ENCODE measurements at regions of chr17 and their contacts with region 1.

Region 1: DNA sequence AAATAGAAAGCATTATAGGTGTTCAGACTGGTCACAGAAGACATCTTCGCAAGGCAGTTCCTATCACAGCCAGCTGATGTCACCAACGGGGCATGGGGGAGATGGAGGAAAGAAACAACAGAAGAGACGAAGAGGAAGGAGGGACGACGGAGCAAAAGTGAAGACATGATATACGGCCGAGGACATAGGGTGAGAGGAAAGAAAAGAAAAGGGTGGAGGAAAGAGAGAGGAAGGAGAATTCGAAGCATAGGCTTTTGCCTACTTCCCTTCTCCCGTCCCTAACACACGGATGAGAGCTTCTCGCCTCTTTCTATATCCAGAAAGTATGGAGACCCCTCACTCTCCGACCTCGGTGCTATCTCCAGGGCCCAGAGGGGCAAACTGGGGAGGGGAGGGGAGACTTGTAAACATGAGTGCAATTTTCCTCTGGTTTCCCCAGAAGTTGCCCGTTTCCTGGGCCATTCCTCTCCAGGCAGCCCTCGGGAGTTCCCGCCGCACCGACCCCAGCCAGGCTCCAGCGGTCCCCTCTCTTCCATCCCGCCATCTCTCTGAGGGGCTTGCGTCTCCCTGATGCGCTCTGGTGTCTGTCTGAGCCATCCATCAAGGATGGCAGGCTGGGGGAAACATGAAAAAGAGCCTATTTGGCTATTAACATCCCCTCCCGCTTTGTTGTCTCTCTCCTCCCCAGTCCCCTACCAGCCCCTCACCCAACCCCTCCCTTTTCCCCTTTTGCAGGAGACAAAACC is 26.0 kb downstream of the COPZ2 start:
- DNase-seq: no peak
- ATAC-seq: peak in 5 of 8 donors; percentile 25 to 62 (median 44)
- H3K4me3 ChIP-seq: peak overlapping the region in 9 of 10 donors; percentile 23 to 52 (median 42)
- H3K27ac ChIP-seq: no peak overlapping the region
- H3K4me1 ChIP-seq: peaks cover 0 to 13% (median 10%) of the 10 kb centered on the region in 9 donors
- H3K27me3 ChIP-seq: peaks cover 0 to 66% (median 59%) of the 10 kb centered on the region in 7 donors
- CTCF ChIP-seq: peak in 5 of 9 donors; percentile 4 to 52 (median 33)

Region 2: DNA sequence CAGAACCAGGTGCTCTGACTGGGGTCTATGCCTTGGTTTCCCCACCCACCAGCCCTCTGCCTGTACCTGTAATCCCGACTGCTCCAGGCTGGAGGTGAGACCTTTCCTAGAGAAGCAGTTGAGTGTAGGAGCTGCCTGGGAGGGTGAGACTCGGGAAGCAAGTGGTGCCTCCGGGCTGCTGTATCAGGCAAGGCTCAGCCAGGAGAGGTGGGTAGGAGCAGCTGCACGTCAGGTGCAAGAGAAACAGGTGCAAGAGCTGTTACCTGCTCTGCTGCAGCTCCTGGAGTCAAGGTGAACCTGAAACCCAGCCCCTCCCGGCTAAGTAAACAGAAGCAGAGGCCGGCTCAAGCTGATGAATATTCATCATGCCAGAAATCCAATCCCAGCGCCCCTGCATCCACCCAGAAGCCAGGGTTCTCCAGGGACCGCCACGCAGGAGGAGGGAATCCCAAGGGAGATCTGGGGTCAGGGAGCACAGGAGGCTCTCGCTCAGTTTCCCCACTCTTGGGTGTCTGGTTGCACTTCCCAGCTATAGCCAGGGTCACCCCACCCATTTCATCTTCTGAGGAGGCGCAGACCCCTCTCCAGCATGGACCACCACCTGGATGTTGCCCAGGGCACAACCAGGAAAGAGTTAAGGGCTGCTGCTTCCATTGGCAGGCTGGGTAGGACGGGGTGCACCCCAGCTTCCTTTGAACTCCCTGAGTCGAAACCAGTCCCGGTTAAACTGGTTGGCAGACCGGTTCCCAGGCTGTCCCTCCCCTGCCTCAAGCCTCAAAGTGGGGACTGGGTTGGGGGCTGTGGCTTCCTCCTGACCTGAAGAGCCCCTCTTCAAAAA is 53.8 kb before region 1 on chr17 and contains the start of gene PRR15L:
- intact Hi-C with region 1: loop called in 1 of 10 experiments (anchors 10 kb)
- DNase-seq: no peak
- ATAC-seq: no peak
- H3K4me3 ChIP-seq: no peak within 1 kb of the TSS
- H3K27ac ChIP-seq: no peak within 1 kb of the TSS
- H3K4me1 ChIP-seq: no peaks in the 10 kb centered on the region
- H3K27me3 ChIP-seq: no peaks in the 10 kb centered on the region
- CTCF ChIP-seq: no peak
- total RNA-seq, gene PRR15L: not detected

Region 3: DNA sequence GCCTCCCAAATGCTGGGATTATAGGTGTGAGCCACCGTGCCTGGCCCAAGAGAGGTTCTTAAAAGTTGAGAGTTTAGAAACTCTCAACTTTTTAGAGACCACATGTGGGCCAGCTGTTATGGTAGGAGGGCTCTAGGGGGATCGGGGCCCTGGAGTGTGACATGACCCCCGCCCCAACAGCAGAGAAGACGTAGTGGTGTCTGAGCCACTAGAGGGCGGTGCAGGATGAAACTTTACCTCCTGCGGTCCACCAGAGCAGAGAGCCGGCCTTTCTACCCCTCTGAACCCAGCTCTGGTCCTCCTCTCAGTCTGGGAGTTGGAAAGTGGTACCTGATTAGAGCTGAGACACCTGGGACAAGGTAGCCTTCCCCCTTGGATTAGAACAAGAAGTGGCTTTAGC is 33.3 kb before region 1 on chr17:
- intact Hi-C with region 1: loop called in 3 of 10 experiments (anchors 2 to 5 kb)
- DNase-seq: peak; percentile 42
- ATAC-seq: peak in 7 of 8 donors; percentile 58 to 77 (median 72)
- H3K4me3 ChIP-seq: no peak overlapping the region
- H3K27ac ChIP-seq: no peak overlapping the region
- H3K4me1 ChIP-seq: peaks cover 0 to 28% (median 2%) of the 10 kb centered on the region in 9 donors
- H3K27me3 ChIP-seq: no peaks in the 10 kb centered on the region
- CTCF ChIP-seq: peak; percentile 54 to 79 (median 75)

Measured in heart right ventricle (tissue), 16 donors.